T-cell (primary cell): ENCODE measurements at regions of chr16 and their contacts with region 1.

Region 1: DNA sequence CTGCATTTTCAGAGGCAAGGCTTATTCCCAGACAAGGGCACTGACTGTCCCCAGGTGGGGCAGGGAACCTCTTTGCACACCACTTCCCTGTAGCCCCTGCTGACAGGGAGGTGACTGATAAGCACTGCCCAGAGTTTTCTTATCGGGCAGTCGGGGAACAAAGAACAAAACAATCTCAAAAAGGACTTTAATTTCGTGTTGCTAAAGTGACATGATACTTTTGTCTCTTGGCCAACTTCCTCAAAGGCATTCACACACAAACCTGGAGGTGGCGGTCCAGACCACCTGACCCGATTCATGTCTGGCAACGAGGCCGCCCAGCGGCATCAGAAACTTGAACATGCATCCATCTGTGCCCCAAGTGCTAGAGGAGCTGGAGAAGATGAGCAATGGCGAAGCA is 28.9 kb downstream of the ZDHHC7 start:
- DNase-seq: peak in 19 of 35 experiments; percentile 6 to 37 (median 13)
- ATAC-seq: no peak
- H3K4me3 ChIP-seq: no peak overlapping the region
- H3K4me3 Mint-ChIP-seq: no peak overlapping the region
- H3K27ac ChIP-seq: no peak overlapping the region
- H3K27ac Mint-ChIP-seq: peak overlapping the region in 1 of 2 donors; percentile 52
- H3K4me1 ChIP-seq: no peaks in the 10 kb centered on the region
- H3K4me1 Mint-ChIP-seq: peaks cover 15 to 16% (median 16%) of the 10 kb centered on the region in 3 donors
- H3K27me3 ChIP-seq: no peaks in the 10 kb centered on the region
- H3K27me3 Mint-ChIP-seq: no peaks in the 10 kb centered on the region

Region 2: GRCh38 chr16:84198401-84198800 is 784.0 kb before region 1 on chr16:
- CTCF ChIA-PET with region 1: no interaction called
- POLR2A ChIA-PET with region 1: no interaction called
- DNase-seq: no peak
- ATAC-seq: no peak
- H3K4me3 ChIP-seq: no peak overlapping the region
- H3K4me3 Mint-ChIP-seq: no peak overlapping the region
- H3K27ac ChIP-seq: no peak overlapping the region
- H3K27ac Mint-ChIP-seq: no peak overlapping the region
- H3K4me1 ChIP-seq: peaks cover 7 to 18% of the 10 kb centered on the region in 2 experiments
- H3K4me1 Mint-ChIP-seq: peaks cover 12 to 13% (median 13%) of the 10 kb centered on the region in 3 donors
- H3K27me3 ChIP-seq: peaks cover 2 to 13% of the 10 kb centered on the region in 2 experiments
- H3K27me3 Mint-ChIP-seq: peaks cover 0 to 3% of the 10 kb centered on the region in 2 donors

Region 3: DNA sequence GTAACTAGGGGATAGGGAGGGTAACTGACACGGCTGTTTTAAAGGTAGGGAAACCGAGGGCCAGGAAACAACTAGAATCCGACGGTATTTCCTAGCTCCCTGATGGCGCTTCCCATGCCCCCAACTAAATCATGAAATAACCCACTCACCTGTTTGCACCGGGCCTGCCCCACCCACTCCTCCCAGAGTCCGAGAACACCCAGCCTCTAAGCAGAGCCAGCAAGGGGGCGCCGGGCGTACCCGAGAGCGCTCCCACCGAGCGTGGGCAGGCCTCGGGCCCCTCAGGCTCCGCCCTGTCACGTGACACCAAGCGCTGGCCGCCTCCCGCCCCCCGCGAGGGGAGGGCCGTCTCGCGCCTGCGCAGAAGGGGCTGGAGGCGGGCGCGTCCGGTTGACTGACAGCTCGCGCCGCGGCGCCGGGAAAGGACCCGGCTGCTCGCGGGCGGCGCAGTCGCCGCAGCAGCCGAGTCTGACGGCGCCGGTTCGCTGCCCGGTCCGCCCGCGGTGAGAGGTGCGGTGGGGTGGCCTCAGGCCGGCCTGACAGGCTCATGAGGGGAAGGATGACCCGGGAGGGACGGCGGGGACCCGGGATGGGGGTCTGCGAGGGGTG is 45.0 kb after region 1 on chr16 and contains the start of gene KIAA0513:
- CTCF ChIA-PET with region 1: interaction called in 1 of 2 experiments, 10 read pairs
- POLR2A ChIA-PET with region 1: no interaction called
- DNase-seq: peak; percentile 84 to 98 (median 93)
- ATAC-seq: peak; percentile 74 to 82 (median 80)
- H3K4me3 ChIP-seq: peak within 1 kb of the TSS; percentile 60 to 84
- H3K4me3 Mint-ChIP-seq: peak within 1 kb of the TSS; percentile 90 to 91 (median 91)
- H3K27ac ChIP-seq: peak within 1 kb of the TSS; percentile 79
- H3K27ac Mint-ChIP-seq: peak within 1 kb of the TSS; percentile 82 to 92
- H3K4me1 ChIP-seq: peaks cover 17 to 34% of the 10 kb centered on the region in 2 experiments
- H3K4me1 Mint-ChIP-seq: peaks cover 25 to 42% (median 35%) of the 10 kb centered on the region in 3 donors
- H3K27me3 ChIP-seq: no peaks in the 10 kb centered on the region
- H3K27me3 Mint-ChIP-seq: no peaks in the 10 kb centered on the region
- total RNA-seq, gene KIAA0513: 9.2 to 19.7 (median 17.2) TPM